Activated T-helper 1 cell treated with anti-CD3 and anti-CD28 coated beads, Interleukin-12 subunit alpha, Interleukin-12 subunit beta, Interleukin-2, Interleukin-4 antibody, amounts not matched to agents 30 ng/mL and 10 ng/mL and 1 ng/mL, durations not matched to agents 14 hours and 24 hours and 36 hours (primary cell): ENCODE measurements at regions of chr12 and their contacts with region 1.

Region 1: DNA sequence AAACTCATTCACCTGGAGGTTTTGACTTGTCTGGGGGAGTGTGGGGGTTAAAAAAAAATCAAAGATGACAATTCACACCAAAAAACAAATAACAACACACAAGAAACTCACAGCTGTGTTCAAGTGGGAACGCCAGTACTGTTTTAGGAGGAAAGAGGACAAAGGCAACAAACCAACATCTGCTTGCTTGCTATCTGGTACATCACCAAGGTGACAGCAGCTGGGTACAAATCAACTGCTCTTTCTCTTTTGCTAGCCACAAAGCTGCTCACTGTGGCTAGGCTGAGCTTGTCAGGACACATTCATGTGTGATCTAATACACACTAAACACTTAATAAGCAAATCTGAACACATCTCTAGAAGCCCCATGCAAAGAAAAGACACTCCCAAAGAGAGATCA is 128.0 kb upstream of the RAP1B start:
- DNase-seq: peak; percentile 44
- H3K4me3 Mint-ChIP-seq: peak overlapping the region; percentile 66
- H3K27ac Mint-ChIP-seq: peak overlapping the region; percentile 91
- H3K4me1 Mint-ChIP-seq: peaks cover 69% of the 10 kb centered on the region
- H3K27me3 Mint-ChIP-seq: no peaks in the 10 kb centered on the region

Region 2: GRCh38 chr12:68175557-68176061 is 307.1 kb before region 1 on chr12:
- intact Hi-C with region 1: loop called (anchors 5 kb)
- DNase-seq: peak; percentile 81
- H3K4me3 Mint-ChIP-seq: peak overlapping the region; percentile 32
- H3K27ac Mint-ChIP-seq: peak overlapping the region; percentile 85
- H3K4me1 Mint-ChIP-seq: peaks cover 81% of the 10 kb centered on the region
- H3K27me3 Mint-ChIP-seq: no peaks in the 10 kb centered on the region

Region 3: DNA sequence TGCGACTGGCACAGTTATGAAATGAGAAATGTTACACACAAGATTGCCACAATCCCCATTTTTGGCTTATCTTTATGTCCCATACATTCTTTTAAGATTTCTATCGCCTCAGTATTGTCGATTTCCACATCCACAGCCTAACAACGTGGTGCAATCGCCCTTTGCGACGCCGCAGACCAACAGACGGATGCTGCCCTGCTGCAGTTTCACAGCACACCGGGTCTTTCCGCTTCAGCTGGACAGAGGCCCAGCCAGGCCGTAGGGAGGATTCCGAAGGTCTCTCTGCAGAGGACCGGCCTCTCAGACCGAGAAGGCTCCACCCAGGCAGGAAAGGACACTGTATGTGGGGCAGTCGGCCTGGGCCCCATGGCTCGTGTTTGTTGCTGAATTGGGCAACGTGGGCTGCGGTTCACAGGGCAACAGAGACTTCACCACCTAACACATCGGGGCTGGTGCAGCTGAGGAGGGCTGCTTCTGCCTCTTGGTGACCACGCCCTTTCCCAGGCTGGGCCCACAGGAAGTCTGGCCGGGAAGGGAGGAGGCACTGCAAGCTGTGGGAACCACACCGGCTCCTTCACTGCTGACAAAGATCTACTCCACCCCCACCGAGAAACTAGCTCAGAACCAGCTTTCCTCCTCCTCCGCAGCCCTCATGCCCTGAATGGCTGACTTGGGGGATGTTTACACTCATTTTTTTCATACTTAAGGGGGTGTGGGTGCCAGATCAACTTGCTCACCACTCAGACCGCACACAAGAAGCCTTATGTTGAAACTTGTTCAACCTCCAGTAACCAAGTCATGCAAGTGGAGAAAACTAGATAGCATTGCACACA is 117.6 kb before region 1 on chr12:
- intact Hi-C with region 1: loop called (anchors 1 kb)
- DNase-seq: peak; percentile 85
- H3K4me3 Mint-ChIP-seq: peak overlapping the region; percentile 77
- H3K27ac Mint-ChIP-seq: peak overlapping the region; percentile 92
- H3K4me1 Mint-ChIP-seq: peaks cover 76% of the 10 kb centered on the region
- H3K27me3 Mint-ChIP-seq: no peaks in the 10 kb centered on the region

Region 4: GRCh38 chr12:68374307-68374982 is 108.2 kb before region 1 on chr12:
- intact Hi-C with region 1: loop called (anchors 1 kb)
- DNase-seq: peak; percentile 60
- H3K4me3 Mint-ChIP-seq: peak overlapping the region; percentile 31
- H3K27ac Mint-ChIP-seq: peak overlapping the region; percentile 93
- H3K4me1 Mint-ChIP-seq: peaks cover 68% of the 10 kb centered on the region
- H3K27me3 Mint-ChIP-seq: no peaks in the 10 kb centered on the region

Region 5: GRCh38 chr12:68468036-68468435 is 14.6 kb before region 1 on chr12:
- intact Hi-C with region 1: no loop called
- DNase-seq: no peak
- H3K4me3 Mint-ChIP-seq: no peak overlapping the region
- H3K27ac Mint-ChIP-seq: no peak overlapping the region
- H3K4me1 Mint-ChIP-seq: peaks cover 23% of the 10 kb centered on the region
- H3K27me3 Mint-ChIP-seq: no peaks in the 10 kb centered on the region

Region 6: DNA sequence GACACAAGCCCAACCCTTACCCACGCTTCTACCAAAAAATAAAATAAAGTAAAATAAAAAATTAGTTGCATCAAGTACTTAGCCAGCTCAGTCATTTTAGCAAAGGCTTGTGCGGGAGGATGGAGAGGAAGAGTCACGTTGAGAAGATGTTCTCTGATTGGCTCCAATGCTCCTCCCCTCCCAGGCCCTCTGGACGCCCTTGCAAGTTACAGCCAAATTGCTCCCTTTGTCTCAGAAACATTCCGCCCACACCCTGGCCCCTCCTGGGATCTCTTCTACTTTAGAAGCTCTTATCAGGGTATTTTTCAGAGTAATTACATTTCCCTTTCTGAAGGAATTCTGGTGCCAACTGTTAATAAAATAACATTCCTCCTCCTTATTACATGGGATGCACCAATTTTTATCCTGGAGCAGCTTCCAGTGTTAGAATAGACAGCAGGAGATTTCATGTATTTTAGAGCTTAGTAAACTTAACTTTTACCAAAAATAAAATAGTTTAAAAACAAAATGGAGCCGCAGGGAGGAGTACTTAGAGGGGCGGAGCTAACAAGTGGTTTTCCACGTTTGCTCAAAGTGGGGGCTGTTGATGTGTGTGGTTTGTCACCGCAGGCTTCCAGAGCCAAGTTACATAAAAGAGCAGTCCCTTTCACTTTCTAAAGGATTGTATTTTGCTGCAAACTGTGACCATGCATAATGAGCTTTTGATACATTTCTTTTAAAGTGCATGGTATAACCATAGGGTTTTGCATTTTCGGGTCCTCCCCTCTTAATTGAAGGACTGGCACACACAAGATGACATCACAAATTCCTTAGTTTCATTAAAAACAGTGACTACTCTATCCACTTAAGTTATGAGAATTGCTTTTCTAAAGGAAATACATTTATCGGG is 56.3 kb after region 1 on chr12:
- intact Hi-C with region 1: loop called (anchors 1 kb)
- DNase-seq: peak; percentile 54
- H3K4me3 Mint-ChIP-seq: peak overlapping the region; percentile 23
- H3K27ac Mint-ChIP-seq: peak overlapping the region; percentile 52
- H3K4me1 Mint-ChIP-seq: peaks cover 48% of the 10 kb centered on the region
- H3K27me3 Mint-ChIP-seq: peaks cover 2% of the 10 kb centered on the region

Region 7: DNA sequence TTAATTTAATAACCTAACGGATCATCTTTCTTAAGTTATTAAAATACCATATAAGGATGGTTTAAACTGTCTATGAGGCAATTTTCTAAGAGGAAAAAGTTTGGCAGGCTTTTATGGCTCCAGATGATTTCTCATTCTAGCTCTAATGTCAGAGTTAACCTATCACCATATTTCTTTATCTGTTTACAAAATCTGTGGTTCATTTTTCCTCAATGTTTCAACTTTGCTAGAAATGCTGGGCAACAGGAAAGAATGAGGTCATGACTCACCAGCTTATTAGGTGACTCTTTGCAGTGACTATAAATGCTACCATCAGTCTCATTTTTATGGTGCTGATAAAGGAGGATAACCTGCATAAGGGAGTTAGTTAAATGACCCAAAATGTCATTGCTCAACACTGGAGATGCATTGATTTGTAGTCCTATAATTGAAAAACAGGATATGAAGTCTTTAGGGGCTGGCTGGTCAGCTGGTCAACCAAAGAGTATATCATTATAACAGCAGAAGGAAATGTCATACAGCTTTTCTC is 82.8 kb after region 1 on chr12:
- intact Hi-C with region 1: loop called (anchors 2 kb)
- DNase-seq: no peak
- H3K4me3 Mint-ChIP-seq: peak overlapping the region; percentile 1
- H3K27ac Mint-ChIP-seq: no peak overlapping the region
- H3K4me1 Mint-ChIP-seq: peaks cover 24% of the 10 kb centered on the region
- H3K27me3 Mint-ChIP-seq: no peaks in the 10 kb centered on the region

Region 8: GRCh38 chr12:68587448-68587873 is 104.8 kb after region 1 on chr12:
- intact Hi-C with region 1: loop called (anchors 2 kb)
- DNase-seq: peak; percentile 38
- H3K4me3 Mint-ChIP-seq: peak overlapping the region; percentile 7
- H3K27ac Mint-ChIP-seq: peak overlapping the region; percentile 31
- H3K4me1 Mint-ChIP-seq: peaks cover 32% of the 10 kb centered on the region
- H3K27me3 Mint-ChIP-seq: no peaks in the 10 kb centered on the region

Region 9: DNA sequence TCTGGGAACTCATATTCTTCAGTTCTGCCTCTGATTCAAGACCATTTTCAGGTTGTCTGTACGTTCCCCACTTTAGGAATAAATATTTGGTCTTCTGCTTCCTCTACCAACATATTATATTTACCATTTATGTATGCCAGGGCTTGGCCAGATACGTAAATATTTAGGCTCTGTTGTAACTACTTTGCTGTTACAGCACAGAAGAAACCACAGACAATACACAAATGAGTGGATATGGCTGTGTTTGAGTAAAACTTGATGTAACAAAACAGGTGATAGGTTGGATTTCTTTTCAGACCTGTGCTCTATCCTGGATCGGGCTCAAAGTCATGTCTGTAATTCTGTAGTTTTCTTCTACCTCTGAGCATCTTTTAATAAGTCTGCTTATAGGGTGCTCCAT is 165.5 kb after region 1 on chr12:
- intact Hi-C with region 1: no loop called
- DNase-seq: no peak
- H3K4me3 Mint-ChIP-seq: no peak overlapping the region
- H3K27ac Mint-ChIP-seq: peak overlapping the region; percentile 70
- H3K4me1 Mint-ChIP-seq: peaks cover 42% of the 10 kb centered on the region
- H3K27me3 Mint-ChIP-seq: no peaks in the 10 kb centered on the region